Right ventricle myocardium inferior (tissue), 1 donor: ENCODE measurements at regions of chr19 and their contacts with region 1.

Region 1: GRCh38 chr19:41746593-41747227 is 8.6 kb upstream of the CEACAM6 start:
- DNase-seq: peak; percentile 79
- ATAC-seq: no peak

Region 2: DNA sequence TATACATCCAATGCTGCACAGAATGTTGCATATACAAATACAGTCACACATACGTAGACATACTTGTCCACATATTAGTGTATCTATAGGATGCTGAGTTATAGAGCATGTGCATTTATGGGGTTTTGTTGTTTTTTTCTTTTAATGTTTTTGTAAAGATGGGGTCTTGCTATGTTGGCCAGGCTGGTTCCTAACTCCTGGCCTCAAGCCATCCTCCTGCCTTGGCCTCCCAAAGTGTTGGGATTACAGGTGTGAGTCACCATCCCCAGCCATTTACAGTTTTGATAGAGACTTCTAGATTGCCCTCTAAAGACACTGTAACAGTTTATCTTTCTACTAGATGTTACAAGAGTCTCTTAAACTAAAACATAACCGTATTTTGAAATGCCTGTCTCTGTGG is 468.2 kb before region 1 on chr19:
- intact Hi-C with region 1: no loop called
- DNase-seq: no peak
- ATAC-seq: no peak

Region 3: DNA sequence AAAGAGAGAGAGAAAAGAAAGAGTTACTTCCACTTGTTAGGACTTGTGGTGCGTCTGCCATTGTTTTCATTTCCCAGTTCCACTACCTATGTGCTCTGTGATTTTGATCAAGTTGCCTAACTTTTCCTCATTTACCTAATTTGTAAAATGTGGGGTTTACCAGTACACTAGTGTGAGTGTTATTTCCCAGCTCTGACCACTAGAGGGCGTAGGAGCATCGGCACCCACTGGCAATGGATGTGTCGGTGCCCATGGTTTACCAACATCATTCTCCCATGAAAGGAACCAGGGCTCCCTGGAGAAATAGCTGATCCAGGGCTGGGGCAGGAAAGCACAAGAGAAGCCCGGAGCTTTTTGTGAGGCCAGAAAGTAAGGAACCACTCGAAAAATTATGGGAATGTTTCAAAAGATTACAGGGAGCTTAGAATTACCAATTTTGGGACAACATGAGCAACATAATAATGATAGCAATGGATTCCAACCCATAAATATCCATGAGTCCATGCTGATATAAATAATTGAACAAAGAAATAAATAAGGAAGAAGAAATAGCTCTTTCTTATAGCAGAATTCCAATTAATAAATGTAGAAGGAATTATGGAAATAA is 104.7 kb before region 1 on chr19:
- intact Hi-C with region 1: loop called (anchors 5 kb)
- DNase-seq: peak; percentile 78
- ATAC-seq: no peak